Head of caudate nucleus (tissue), 42 donors: ENCODE measurements at regions of chr20 and their contacts with region 1.

Region 1: GRCh38 chr20:49713753-49714712 is at the start of gene B4GALT5:
- DNase-seq: peak; percentile 57 to 91 (median 80)

Region 2: GRCh38 chr20:49508435-49509199 is 205.4 kb before region 1 on chr20:
- intact Hi-C with region 1: no loop called
- DNase-seq: peak in 24 of 42 donors; percentile 9 to 68 (median 30)

Region 3: GRCh38 chr20:49603209-49603627 is 110.8 kb before region 1 on chr20:
- intact Hi-C with region 1: no loop called
- DNase-seq: no peak

Region 4: GRCh38 chr20:49775229-49775693 is 61.2 kb after region 1 on chr20:
- intact Hi-C with region 1: loop called (anchors 10 kb)
- DNase-seq: peak in 7 of 42 donors; percentile 9 to 61 (median 29)

Region 5: GRCh38 chr20:49812463-49813304 is 98.7 kb after region 1 on chr20 and contains the start of gene SLC9A8:
- intact Hi-C with region 1: loop called (anchors 5 kb)
- DNase-seq: peak; percentile 80 to 97 (median 91)